Ascending aorta (tissue), 2 donors: ENCODE measurements at regions of chr19 and their contacts with region 1.

Region 1: DNA sequence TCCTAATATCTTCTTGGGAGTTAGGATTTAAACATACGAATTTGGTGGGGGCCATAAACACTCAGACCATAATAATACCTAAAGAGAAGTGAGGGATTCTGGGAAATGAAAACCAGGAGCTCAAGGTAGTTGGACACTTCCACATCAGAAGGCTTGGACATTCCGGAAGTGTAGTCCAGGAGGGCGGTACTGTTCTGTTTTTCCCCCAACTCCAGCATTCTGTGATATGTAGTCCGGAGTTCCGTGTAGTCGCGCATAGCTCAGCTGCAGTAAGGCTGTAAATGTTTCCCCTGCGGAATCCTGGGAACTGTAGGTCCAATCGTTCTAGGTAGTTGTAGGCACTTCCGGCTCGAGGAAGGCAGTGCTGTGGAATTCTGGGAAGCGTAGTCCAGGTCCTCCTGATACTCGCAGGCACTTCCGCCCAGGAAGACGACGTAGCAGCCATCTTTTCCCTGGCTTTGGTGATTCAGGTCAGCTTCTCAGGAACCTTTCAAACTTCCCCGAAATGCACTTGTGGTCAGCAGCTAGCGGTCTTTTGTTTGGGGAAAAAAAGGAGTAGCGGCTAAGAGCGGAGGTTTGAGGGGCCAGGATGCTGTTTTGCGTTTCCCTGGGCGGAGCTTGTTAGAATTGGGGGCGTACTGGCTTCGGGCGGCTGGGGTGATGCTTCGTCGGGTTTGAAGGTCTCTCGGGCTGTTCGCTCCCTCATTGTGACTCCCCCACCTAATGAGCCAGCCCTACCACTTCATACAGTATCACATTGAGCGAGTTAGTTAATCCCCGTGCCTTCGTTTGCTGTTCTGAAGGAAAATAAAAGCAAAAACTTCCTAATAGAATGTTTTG is at the start of gene ZNF226:
- DNase-seq: peak; percentile 82 to 96
- H3K4me3 ChIP-seq: peak within 1 kb of the TSS; percentile 63 to 80
- H3K27ac ChIP-seq: peak within 1 kb of the TSS; percentile 88 to 89
- H3K4me1 ChIP-seq: peaks cover 0 to 6% of the 10 kb centered on the region in 2 donors
- H3K27me3 ChIP-seq: no peaks in the 10 kb centered on the region
- CTCF ChIP-seq: no peak
- total RNA-seq, gene ZNF226: 4.7 TPM

Region 2: DNA sequence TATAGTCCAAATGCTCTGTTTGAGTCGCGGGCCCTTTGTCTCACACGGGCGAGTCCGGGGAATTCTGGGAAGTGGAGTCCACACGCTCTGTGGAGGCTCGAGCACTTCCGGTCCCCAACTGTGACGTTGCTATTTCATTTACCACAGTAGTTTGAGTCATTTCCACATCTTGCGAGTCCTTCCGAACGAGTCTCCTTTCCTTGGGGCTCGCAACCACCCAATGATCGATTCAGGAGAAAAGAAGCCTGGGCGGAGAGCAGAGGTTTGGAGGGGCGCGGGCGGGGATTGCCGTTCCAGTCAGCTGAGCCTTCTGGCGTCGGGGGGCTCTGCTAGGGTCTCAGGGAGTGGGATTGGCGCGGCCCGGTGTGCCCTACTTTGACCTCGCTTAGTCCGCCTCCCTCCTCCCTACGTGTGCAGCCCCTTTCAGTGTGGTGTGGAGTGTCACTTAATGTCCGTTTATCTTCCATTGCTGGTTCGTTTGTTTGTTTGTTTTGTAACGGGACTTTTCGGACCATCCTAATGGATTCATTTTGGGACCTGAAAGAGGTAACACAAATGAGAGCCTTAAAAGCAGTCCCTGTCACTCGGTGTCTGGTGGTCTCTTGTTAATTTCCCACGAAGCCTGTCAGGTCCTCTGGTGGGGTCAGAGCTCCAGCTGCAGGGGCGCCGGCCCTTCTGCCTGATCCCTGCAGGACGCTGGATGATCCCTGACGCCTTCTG is 139.5 kb before region 1 on chr19 and contains the start of gene ZNF222:
- intact Hi-C with region 1: no loop called
- DNase-seq: peak; percentile 38 to 91
- H3K4me3 ChIP-seq: peak within 1 kb of the TSS; percentile 70 to 84
- H3K27ac ChIP-seq: peak within 1 kb of the TSS; percentile 29 to 57
- H3K4me1 ChIP-seq: peaks cover 2 to 3% of the 10 kb centered on the region in 2 donors
- H3K27me3 ChIP-seq: no peaks in the 10 kb centered on the region
- CTCF ChIP-seq: no peak
- total RNA-seq, gene ZNF222: 0.43 TPM

Region 3: DNA sequence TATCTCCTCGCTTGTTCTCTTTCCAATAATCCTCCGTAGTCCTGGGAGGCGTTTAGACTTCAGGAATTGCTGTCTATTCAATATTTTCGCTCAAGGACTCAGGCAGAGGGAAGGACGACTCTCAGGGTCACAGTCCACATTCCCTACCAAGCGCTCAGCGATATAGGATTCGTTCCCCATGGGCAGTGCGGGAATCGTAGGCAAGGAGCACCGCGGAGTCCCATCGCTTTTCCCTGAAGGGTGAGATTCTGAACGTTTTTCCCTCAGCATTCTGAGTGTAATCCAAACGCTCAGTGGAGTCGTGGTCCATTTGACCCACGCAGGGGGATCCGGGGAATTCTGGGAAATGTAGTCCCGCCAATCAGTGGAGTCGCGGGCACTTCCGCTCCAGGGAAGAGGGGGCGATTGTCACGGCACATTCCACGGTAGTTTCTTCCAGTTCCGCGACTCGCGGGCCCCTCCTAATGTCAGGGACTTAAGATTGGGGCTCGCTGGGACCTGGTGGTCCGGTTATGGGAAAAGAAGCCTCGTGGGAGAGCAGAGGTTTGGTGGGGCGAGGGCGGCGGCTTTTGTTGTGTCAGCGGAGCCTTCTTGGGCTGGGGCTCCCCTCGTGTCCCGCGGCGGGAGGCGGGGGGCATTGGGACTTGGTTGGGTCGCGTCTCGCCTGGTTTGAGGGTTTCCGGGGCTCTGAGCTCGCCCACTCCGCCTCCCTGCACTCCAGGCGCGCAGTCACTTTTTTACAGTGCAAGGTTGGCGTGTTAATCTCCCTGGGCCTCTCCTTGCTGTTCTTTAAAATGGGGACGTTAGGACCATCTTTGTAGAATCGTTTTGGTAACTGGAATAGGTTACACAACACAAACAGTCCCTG is 23.5 kb before region 1 on chr19 and contains the start of gene ZNF234:
- intact Hi-C with region 1: loop called (anchors 1 kb)
- DNase-seq: peak; percentile 35 to 88
- H3K4me3 ChIP-seq: peak within 1 kb of the TSS; percentile 69 to 96
- H3K27ac ChIP-seq: peak within 1 kb of the TSS; percentile 59 to 80
- H3K4me1 ChIP-seq: peaks cover 0 to 10% of the 10 kb centered on the region in 2 donors
- H3K27me3 ChIP-seq: no peaks in the 10 kb centered on the region
- CTCF ChIP-seq: no peak
- total RNA-seq, gene ZNF234: 7.9 TPM

Region 4: GRCh38 chr19:44176590-44176989 is 11.7 kb after region 1 on chr19:
- intact Hi-C with region 1: no loop called
- DNase-seq: no peak
- H3K4me3 ChIP-seq: no peak overlapping the region
- H3K27ac ChIP-seq: no peak overlapping the region
- H3K4me1 ChIP-seq: no peaks in the 10 kb centered on the region
- H3K27me3 ChIP-seq: no peaks in the 10 kb centered on the region
- CTCF ChIP-seq: no peak

Region 5: GRCh38 chr19:44356383-44357111 is 191.7 kb after region 1 on chr19 and contains the start of gene ZNF112:
- intact Hi-C with region 1: loop called (anchors 1 kb)
- DNase-seq: peak; percentile 41 to 90
- H3K4me3 ChIP-seq: peak within 1 kb of the TSS; percentile 69 to 73
- H3K27ac ChIP-seq: peak within 1 kb of the TSS; percentile 33 to 56
- H3K4me1 ChIP-seq: peaks cover 0 to 5% of the 10 kb centered on the region in 2 donors
- H3K27me3 ChIP-seq: no peaks in the 10 kb centered on the region
- CTCF ChIP-seq: no peak
- total RNA-seq, gene ZNF112: 0.11 TPM

Region 6: DNA sequence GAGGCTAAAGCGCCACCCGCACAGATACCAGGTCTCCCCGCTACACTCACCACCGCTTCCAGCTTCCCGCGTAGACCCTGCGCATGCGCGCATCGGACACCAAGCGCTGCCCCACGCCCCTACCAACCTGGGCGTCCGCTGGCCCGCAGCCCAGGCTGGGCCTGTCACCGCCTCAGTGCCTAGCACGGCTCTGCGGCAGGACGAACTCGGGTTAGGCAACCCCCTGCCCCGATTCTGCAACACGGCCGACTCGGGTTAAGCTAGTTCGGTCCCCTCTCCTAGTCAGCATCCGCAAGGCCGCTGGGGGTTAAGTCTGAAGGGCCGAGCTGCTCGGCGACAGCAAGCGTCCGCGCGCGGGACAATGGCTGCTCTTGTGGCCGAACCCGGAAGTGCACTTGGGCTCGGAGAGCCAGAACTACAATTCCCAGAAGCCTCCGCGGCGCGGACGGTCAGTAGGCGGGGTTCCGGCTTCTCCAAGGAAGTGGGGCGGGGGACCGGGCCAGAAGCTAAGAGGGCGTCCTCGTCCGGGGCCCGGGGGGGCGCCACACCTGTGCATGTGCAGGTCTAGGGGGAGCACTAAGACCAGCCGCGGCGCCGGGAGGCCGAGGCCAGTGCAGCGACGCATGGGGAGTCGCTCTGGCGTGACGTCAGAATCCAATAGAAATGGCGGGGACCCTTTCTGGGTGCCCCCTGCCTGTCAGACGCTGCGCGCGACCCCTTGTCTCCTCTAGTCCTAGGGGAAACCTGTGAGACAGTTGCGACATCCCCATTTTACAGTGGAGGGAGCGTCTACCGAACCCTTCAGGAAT is 335.5 kb after region 1 on chr19 and contains the start of gene ZNF180:
- intact Hi-C with region 1: loop called (anchors 1 kb)
- DNase-seq: peak; percentile 68 to 95
- H3K4me3 ChIP-seq: peak within 1 kb of the TSS; percentile 78 to 92
- H3K27ac ChIP-seq: peak within 1 kb of the TSS; percentile 87 to 88
- H3K4me1 ChIP-seq: peaks cover 0 to 7% of the 10 kb centered on the region in 2 donors
- H3K27me3 ChIP-seq: no peaks in the 10 kb centered on the region
- CTCF ChIP-seq: peak in 2 of 3 experiments; percentile 48
- total RNA-seq, gene ZNF180: 10.9 TPM